ENCODE measurements at regions of chr6 and their contacts with region 1.

Region 1: DNA sequence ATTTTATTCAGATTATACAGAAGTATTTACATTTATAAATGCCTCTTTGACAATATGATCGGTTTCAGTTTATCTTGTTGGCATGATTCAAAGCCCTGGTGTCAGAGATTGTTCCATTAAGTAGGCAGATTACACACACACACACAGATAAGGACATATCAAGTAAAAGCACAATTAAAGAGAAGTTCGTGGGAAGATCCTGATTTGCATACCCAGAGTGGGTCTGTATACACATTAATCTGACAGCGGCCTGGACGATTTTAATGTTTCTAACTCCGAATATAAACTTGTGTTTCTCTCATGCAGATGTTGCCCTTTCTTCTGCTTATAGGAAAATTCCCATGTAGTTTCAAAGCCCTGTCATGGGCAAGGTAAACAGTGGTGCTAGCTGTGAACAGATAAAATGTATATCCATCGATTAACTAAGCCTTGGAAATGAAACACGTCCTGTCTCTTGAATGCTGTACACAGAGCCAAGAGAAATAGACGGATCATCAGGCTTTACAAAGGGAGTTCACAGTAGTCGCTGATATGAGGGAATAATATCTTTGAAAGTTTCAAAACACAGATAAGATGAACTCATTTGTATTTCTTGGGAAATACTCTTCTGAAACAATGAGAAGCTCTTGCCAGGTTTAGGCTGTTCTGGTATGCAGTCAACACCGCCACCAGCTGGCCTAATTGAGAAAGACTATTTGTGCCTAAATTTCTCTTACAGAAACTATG is 108.2 kb upstream of the GMDS start:
- DNase-seq: peak; percentile 17 to 37 (median 30)
- H3K4me3 ChIP-seq: no peak overlapping the region
- H3K4me3 Mint-ChIP-seq: no peak overlapping the region
- H3K27ac ChIP-seq: no peak overlapping the region
- H3K27ac Mint-ChIP-seq: no peak overlapping the region
- H3K4me1 ChIP-seq: no peaks in the 10 kb centered on the region
- H3K4me1 Mint-ChIP-seq: peaks cover 7% of the 10 kb centered on the region
- H3K27me3 ChIP-seq: no peaks in the 10 kb centered on the region
- H3K27me3 Mint-ChIP-seq: peaks cover 0 to 2% (median 0%) of the 10 kb centered on the region in 3 donors
- CTCF ChIP-seq: peak; percentile 75

Region 2: DNA sequence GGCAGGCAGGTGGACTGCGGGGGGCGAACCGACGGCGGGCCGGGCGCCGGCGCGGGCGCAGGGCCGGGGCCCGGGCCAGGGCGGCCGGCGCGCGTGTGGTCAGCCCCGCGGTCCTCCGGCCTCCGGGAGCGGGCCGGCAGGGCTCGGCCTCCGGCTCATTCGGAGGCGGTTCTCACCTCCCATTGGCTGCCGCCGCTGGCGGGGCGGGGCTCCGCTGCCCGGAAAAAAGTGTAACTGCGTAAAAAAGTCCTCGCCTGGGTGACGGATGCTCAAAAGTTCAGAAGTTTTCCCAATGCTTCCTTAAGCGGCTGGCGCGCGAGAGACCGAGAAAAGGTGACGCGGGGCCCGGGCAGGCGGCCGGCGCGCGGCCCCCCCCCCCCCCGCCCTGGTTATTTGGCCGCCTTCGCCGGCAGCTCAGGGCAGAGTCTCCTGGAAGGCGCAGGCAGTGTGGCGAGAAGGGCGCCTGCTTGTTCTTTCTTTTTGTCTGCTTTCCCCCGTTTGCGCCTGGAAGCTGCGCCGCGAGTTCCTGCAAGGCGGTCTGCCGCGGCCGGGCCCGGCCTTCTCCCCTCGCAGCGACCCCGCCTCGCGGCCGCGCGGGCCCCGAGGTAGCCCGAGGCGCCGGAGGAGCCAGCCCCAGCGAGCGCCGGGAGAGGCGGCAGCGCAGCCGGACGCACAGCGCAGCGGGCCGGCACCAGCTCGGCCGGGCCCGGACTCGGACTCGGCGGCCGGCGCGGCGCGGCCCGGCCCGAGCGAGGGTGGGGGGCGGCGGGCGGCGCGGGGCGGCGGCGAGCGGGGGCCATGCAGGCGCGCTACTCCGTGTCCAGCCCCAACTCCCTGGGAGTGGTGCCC is 743.7 kb before region 1 on chr6 and contains the start of gene FOXC1:
- intact Hi-C with region 1: loop called in 1 of 2 experiments (anchors 5 kb)
- DNase-seq: peak; percentile 55 to 73 (median 64)
- H3K4me3 ChIP-seq: peak within 1 kb of the TSS; percentile 16 to 68 (median 20)
- H3K4me3 Mint-ChIP-seq: peak within 1 kb of the TSS; percentile 80 to 90
- H3K27ac ChIP-seq: no peak within 1 kb of the TSS
- H3K27ac Mint-ChIP-seq: no peak within 1 kb of the TSS
- H3K4me1 ChIP-seq: peaks cover 54 to 72% of the 10 kb centered on the region in 2 donors
- H3K4me1 Mint-ChIP-seq: peaks cover 52% of the 10 kb centered on the region
- H3K27me3 ChIP-seq: peaks cover 72 to 79% of the 10 kb centered on the region in 2 donors
- H3K27me3 Mint-ChIP-seq: peaks cover 72 to 95% (median 73%) of the 10 kb centered on the region in 3 donors
- CTCF ChIP-seq: no peak
- polyA plus RNA-seq, gene FOXC1: 0.36 TPM in 1 of 3 donors, not detected in the others

Region 3: DNA sequence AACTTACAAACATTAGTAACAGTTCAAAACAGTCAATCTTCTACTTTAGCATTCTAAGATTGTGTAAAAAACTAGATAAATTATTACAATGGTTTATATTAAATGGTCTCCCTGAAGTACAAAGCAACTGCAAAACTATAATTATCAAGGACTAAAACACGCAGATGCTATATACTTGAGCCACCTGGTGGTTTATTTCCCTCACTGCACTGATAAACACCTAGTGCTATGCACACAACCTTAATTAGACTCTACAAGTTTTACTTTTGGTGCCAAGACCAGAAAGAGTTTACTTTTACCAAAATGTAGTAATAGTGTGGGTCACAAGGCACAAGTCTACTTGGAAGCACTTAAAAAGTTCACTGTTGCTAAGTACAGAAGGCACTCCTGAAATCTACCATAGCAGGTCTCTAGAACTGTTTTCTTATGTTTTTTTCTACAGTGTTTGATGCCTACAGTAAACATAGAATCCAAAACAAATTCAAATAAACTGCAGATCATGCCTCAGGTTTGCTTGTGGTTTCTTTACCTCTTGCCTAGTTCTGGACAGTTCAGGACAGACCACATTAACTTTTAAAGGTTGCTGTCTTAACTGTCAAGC is 157.4 kb before region 1 on chr6:
- intact Hi-C with region 1: loop called in 1 of 2 experiments (anchors 10 kb)
- DNase-seq: peak; percentile 22 to 44 (median 30)
- H3K4me3 ChIP-seq: no peak overlapping the region
- H3K4me3 Mint-ChIP-seq: no peak overlapping the region
- H3K27ac ChIP-seq: no peak overlapping the region
- H3K27ac Mint-ChIP-seq: no peak overlapping the region
- H3K4me1 ChIP-seq: peaks cover 11 to 12% of the 10 kb centered on the region in 2 donors
- H3K4me1 Mint-ChIP-seq: peaks cover 19% of the 10 kb centered on the region
- H3K27me3 ChIP-seq: no peaks in the 10 kb centered on the region
- H3K27me3 Mint-ChIP-seq: no peaks in the 10 kb centered on the region
- CTCF ChIP-seq: peak; percentile 83

Region 4: DNA sequence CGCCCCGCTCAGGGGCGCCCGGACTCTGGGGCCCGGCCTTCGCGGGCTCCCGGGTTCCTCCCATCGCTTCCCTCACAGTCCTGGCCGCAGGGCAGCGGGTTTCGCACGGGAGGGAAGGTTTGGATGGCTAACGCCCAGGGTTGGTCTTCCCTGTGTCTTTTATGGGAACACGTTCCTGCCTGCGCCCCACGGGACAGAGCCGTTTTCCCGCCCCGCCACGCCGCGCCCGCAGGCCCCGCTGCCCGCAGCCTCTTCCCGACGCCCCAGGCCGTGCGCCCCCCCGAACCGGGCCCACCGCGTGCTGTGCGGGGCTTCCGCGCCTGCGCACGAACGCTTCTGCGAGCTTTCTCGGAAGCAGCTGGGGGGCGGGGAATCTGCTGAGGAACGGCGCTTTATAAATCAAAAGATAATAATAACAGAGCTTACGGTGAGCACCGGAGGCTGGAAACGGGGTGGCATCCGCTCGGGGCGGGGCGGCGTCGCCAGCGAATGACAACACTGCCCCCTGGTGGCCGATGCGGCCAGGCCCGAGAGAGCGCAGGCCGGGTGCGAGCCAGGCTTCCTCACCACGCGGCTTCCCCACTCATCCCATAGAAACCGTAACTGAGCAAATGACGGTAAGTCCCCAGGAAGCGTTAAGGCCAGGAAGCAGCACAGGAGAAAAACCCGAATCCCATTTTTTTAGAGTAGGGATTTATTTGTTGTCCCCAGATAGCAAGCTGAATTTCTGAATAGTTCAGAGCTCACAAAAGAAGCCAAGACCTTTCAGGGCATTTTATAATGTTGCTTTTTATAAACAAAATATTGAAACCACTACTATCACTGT is 280.8 kb after region 1 on chr6:
- intact Hi-C with region 1: loop called in 1 of 2 experiments (anchors 10 kb)
- DNase-seq: peak; percentile 59 to 78 (median 64)
- H3K4me3 ChIP-seq: peak overlapping the region; percentile 18 to 77 (median 31)
- H3K4me3 Mint-ChIP-seq: peak overlapping the region; percentile 74 to 83
- H3K27ac ChIP-seq: no peak overlapping the region
- H3K27ac Mint-ChIP-seq: no peak overlapping the region
- H3K4me1 ChIP-seq: peaks cover 7 to 12% of the 10 kb centered on the region in 2 donors
- H3K4me1 Mint-ChIP-seq: peaks cover 6% of the 10 kb centered on the region
- H3K27me3 ChIP-seq: peaks cover 0 to 11% of the 10 kb centered on the region in 2 donors
- H3K27me3 Mint-ChIP-seq: peaks cover 18 to 22% (median 19%) of the 10 kb centered on the region in 3 donors
- CTCF ChIP-seq: peak; percentile 93

Measured in CD14-positive monocyte (primary cell).